Activated CD4-positive, alpha-beta memory T cell treated with anti-CD3 and anti-CD28 coated beads for 36 hours (primary cell): ENCODE measurements at regions of chr11 and their contacts with region 1.

Region 1: DNA sequence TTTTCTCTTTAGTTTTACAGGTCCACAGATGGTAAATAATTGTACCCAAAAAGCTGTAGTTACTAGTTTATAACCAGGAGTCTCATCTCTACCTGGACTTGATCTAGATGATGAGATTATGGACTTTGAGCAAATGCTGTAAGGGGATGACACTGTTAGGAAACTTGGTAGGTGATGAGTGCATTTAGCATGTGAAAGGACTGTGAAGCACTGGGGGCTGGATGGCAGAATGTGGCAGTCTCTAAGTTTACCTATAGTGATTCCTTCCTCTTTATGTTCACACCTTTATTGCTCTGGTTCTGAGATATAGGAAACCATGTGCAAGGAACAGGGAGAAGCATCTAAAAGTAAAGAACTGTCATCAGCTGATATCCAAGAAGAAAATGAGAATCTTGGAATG is 230.7 kb upstream of the CHORDC1 start:
- DNase-seq: no peak
- H3K4me3 Mint-ChIP-seq: no peak overlapping the region
- H3K27ac Mint-ChIP-seq: no peak overlapping the region
- H3K4me1 Mint-ChIP-seq: no peaks in the 10 kb centered on the region
- H3K27me3 Mint-ChIP-seq: peaks cover 2% of the 10 kb centered on the region

Region 2: GRCh38 chr11:90288212-90288821 is 165.2 kb before region 1 on chr11:
- CTCF ChIA-PET with region 1: interaction called, 3 read pairs
- POLR2A ChIA-PET with region 1: no interaction called
- intact Hi-C with region 1: loop called (anchors 2 kb)
- DNase-seq: no peak
- H3K4me3 Mint-ChIP-seq: no peak overlapping the region
- H3K27ac Mint-ChIP-seq: no peak overlapping the region
- H3K4me1 Mint-ChIP-seq: no peaks in the 10 kb centered on the region
- H3K27me3 Mint-ChIP-seq: peaks cover 3% of the 10 kb centered on the region

Region 3: GRCh38 chr11:90465507-90465906 is 12.0 kb after region 1 on chr11:
- CTCF ChIA-PET with region 1: no interaction called
- POLR2A ChIA-PET with region 1: no interaction called
- intact Hi-C with region 1: no loop called
- DNase-seq: no peak
- H3K4me3 Mint-ChIP-seq: no peak overlapping the region
- H3K27ac Mint-ChIP-seq: no peak overlapping the region
- H3K4me1 Mint-ChIP-seq: no peaks in the 10 kb centered on the region
- H3K27me3 Mint-ChIP-seq: peaks cover 2% of the 10 kb centered on the region